Panc1 (cell line): ENCODE measurements at regions of chr3 and their contacts with region 1.

Region 1: DNA sequence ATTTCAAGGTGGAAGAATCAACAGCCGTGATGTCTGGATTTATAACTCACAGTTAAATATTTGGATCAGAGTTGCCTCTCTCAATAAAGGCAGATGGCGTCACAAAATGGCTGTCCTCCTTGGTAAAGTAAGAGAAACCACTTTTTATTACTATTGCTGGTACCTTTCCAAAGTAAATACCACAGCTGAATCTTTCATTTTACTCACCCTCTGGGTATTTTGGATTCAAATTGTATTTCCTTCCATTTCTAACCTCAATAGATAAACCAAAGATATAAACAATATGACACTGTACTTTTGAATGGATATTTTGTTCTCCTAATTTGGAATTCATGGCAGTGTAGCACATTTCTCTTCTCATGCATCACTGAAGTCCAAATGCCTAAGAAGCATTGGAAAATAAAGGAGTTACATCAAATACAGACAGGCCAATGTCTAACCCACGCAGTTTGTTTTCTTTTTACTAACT is 29.5 kb downstream of the KLHL24 start:
- DNase-seq: peak; percentile 41
- ATAC-seq: peak; percentile 86
- H3K4me3 ChIP-seq: no peak overlapping the region
- H3K27ac ChIP-seq: no peak overlapping the region
- H3K4me1 ChIP-seq: peaks cover 6% of the 10 kb centered on the region; the same call in 1 of the 2 replicates
- H3K27me3 ChIP-seq: no peaks in the 10 kb centered on the region
- CTCF ChIP-seq: no peak

Region 2: DNA sequence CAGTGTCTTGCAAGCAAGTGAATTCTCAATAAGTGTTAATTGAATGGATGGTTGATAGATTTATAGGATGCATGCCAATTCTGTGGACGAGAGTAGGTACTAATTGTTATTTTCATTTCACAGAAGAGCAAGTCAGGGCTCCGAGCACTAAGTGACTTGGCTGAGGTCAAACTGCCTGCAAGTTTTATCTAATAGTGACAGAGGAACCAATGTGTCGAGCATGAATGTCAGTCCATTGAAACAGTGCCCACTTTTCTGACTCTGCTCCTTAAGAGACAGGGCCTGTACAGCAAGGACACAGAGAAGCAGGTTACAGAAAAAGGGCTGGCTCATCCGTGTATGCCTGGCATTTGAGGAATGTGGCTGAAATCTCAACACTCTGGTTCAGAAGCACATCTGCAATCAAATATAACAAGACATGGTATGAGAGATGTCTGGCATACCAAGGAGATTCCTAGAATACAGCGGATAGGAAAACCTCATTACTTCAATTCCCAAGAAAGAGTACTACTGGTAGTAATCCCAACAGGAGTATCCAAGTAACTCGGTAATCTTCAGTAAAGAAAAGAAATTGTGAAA is 417.8 kb before region 1 on chr3:
- CTCF ChIA-PET with region 1: no interaction called
- POLR2A ChIA-PET with region 1: no interaction called
- in situ Hi-C with region 1: no loop called
- intact Hi-C with region 1: no loop called
- DNase-seq: no peak
- ATAC-seq: no peak
- H3K4me3 ChIP-seq: no peak overlapping the region
- H3K27ac ChIP-seq: no peak overlapping the region
- H3K4me1 ChIP-seq: no peaks in the 10 kb centered on the region
- H3K27me3 ChIP-seq: no peaks in the 10 kb centered on the region
- CTCF ChIP-seq: no peak

Region 3: GRCh38 chr3:183710231-183710630 is 45.3 kb after region 1 on chr3:
- CTCF ChIA-PET with region 1: no interaction called
- POLR2A ChIA-PET with region 1: interaction called, 16 read pairs
- in situ Hi-C with region 1: no loop called
- intact Hi-C with region 1: no loop called
- DNase-seq: no peak
- ATAC-seq: no peak
- H3K4me3 ChIP-seq: no peak overlapping the region
- H3K27ac ChIP-seq: no peak overlapping the region
- H3K4me1 ChIP-seq: no peaks in the 10 kb centered on the region
- H3K27me3 ChIP-seq: no peaks in the 10 kb centered on the region
- CTCF ChIP-seq: no peak

Region 4: DNA sequence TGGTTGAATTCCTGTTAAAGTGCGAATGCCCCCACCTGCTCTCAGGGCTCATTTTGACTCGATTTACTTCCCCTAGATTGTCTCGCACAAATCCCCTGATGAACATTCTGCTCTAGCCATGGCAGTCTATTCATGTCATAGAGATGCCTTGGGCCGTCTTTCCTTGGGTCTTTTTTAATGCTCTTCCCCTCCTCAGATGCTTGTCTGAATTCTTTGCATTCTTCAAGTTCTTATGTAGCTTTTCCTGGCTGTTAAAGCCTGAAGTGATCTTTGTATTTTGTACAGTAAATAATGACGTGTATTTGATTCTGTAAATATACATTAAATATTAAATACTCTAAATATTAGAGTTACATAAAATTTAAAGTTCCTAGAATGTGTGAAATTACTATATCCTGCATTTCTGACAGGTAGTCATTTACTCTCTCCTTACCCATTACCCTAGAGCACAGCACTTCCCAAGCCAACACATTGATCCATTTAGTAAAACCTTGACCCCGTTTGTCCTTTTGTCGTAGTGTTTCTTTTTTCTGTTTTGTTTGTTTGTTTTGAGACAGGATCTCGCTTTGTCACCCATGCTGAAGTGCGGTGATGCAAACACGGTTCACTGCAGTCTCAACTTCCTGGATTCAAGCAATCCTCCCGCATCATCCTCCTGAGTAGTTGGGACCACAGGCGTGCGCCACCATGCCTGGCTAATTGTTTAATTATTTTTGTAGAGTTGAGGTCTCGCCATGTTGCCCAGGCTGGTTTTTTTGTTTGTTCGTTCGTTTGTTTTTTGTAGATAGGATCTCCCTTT is 80.6 kb after region 1 on chr3:
- CTCF ChIA-PET with region 1: no interaction called
- POLR2A ChIA-PET with region 1: no interaction called
- in situ Hi-C with region 1: no loop called
- intact Hi-C with region 1: no loop called
- DNase-seq: no peak
- ATAC-seq: peak; percentile 57
- H3K4me3 ChIP-seq: no peak overlapping the region
- H3K27ac ChIP-seq: 0 out of 2 replicates have a peak overlapping the region, but pooled peaks have one; percentile 12
- H3K4me1 ChIP-seq: peaks cover 12% of the 10 kb centered on the region
- H3K27me3 ChIP-seq: no peaks in the 10 kb centered on the region
- CTCF ChIP-seq: no peak